ENCODE measurements at regions of chr1 and their contacts with region 1.

Region 1: GRCh38 chr1:212455803-212456528 is 23.2 kb downstream of the NENF start:
- DNase-seq: peak; percentile 92
- ATAC-seq: peak; percentile 79

Region 2: DNA sequence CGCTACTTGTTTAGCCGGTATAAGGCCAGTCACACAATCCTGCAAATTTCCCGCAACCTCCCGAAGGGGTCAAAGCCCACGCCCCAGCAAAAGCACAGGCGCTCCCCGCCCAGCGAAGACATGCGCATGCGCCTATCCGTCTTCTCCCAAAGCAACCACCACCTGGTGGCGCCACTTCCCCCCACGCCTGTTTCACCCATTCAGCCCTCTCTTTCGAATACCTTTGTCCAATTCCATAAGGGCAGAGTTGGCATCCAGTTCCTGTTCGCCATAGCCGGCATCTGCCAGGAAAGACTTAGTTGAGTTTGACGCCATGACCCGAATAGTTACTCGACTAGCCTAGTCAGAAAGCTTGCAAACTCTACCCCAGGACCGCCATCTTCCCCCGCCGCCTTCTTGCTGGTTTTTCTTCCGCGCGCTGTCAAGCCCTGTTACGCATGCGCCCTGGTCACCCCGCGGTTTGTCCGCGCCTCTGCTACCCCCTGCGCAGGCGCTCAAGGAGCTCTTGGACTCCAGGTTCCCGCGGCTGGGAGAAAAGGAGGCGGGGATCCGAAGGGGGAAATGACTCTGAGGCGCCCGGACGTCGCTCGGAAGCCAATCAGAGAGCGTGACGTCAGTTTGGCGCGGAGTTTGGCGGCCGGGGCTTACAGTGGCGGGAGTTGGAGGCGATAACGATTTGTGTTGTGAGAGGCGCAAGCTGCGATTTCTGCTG is 420.7 kb before region 1 on chr1 and contains the starts of genes DTL and INTS7:
- intact Hi-C with region 1: loop called (anchors 10 kb)
- DNase-seq: peak; percentile 99
- ATAC-seq: peak; percentile 98
- total RNA-seq, gene DTL: 0.79 TPM
- total RNA-seq, gene INTS7: 10.9 TPM

Region 3: DNA sequence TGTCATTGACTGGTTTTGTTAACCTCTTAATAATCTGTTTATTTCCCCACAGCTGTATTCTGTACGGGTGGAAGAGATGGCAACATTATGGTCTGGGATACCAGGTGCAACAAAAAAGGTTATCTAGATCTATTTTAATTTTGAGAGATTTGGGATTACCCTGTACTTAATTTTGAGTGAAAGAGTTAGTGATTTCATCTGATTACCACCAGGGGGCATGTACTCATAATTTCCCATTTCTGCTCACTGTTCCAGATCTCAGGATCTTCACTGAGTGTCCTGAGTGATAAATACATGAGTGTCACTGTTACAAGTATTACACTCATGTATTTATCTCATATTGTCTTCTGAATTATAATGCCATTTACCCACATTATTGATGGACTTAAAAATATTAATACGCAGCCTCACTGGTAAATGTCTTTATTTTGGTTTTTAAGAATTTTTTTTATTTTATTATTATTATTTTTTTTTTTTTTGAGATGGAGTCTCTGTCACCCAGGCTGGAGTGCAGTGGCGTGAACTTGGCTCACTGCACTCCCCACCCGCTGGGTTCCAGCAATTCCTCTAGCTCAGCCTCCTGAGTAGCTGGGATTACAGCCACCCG is 393.0 kb before region 1 on chr1:
- intact Hi-C with region 1: loop called (anchors 5 kb)
- DNase-seq: no peak
- ATAC-seq: peak; percentile 32

Region 4: DNA sequence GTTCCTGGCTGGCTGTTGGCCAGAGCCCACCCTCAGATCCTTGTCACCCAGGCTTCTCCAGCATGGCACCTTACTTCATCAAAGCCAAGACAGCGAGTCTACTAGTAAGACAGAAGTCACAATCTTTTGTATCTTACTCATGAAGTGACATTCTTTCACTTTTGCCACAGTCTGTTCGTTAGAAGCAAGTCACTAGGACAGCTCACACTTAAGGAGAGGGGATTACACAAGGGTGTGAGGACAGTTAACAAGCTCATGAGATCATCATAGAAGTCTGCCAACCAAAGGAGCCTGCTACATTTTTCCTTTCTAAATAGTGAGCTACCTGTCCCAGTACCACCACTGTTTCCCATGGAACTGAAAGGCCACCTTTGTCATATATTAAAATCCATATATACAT is 102.8 kb before region 1 on chr1:
- intact Hi-C with region 1: no loop called
- DNase-seq: no peak
- ATAC-seq: no peak

Region 5: DNA sequence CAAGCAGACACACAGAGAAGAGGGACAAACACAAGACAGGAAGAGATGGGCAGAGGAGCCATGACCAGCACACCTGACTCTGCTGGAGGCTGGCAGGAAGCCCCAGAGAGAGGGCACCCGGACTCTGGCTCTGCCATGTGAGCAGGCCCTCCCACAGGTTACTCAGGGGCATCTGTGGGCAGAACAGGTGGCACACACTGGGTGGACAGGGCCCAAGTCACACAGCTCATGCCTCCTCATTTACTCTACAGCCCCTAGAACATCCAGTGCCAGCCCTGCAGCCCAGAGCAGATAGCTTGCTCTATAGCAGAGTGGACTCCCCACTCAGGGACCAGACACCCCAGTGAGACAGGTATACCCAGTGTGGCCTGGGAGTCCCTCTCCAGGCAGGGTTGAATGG is 69.9 kb before region 1 on chr1:
- intact Hi-C with region 1: no loop called
- DNase-seq: no peak
- ATAC-seq: no peak